ENCODE measurements at regions of chr3 and their contacts with region 1.

Region 1: DNA sequence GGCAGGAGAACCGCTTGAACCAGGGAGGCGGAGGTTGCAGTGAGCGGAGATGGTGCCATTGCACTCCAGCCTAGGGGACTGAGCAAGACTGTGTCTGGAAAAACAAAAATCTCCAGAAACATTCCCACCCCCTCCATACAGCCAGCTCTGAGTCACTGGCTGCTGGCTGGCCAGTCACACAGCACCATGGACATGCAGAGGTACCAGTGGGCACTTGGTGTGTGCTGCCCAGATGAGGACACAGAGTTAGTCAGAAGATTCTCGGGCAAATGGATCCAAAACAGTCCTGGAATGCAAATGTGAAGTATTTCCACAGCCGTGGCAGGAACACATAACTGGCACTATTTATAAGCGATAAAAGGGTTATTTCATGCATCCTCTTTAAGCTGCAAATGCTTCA is 44.6 kb downstream of the BDH1 start:
- DNase-seq: no peak
- ATAC-seq: no peak
- H3K4me3 Mint-ChIP-seq: no peak overlapping the region
- H3K27ac Mint-ChIP-seq: no peak overlapping the region
- H3K4me1 Mint-ChIP-seq: peaks cover 6% of the 10 kb centered on the region
- H3K27me3 Mint-ChIP-seq: no peaks in the 10 kb centered on the region

Region 2: DNA sequence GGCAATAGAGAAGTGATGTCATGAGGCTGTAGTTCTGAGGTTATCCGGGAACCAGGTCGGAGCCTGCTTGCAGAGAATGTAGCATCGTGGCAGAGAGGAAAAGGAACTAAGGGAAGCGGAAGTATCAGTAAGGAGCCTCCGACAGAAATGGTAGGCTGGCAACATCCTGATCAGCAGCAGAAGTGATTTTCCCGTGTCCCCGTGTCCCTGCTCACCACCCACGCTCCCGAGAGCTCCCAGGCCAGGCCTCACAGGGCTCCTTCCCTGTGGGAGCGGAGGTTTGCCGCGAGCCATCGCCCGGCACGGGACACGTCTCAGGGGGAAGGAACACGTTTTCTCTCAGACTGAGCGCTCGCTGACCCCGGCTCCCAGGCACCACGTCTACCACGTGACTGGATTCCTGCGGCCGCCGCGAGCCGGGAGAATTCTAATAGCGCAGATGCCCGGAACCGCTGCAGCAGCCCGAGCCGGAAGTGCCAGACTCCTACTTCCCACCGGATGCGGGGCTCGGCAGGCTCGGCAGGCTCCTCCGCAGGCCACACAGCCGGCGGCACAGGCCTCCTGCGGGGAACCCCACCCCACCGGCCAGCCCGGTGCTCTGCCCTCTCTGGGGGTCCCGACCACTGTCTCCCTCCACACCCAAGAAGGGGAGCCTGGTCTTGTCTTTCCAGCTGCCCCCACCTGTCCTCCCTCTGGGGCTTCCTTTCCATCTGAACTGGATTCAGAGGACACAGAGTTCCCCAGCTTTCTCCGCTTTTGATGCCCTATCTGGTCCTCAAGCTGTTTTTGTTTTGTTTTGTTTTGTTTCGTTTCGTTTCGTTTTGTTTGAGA is 54.7 kb before region 1 on chr3:
- CTCF ChIA-PET with region 1: no interaction called
- POLR2A ChIA-PET with region 1: no interaction called
- intact Hi-C with region 1: loop called in 1 of 2 experiments (anchors 2 kb)
- DNase-seq: peak; percentile 77
- ATAC-seq: peak; percentile 55
- H3K4me3 Mint-ChIP-seq: peak overlapping the region; percentile 76
- H3K27ac Mint-ChIP-seq: peak overlapping the region; percentile 93
- H3K4me1 Mint-ChIP-seq: peaks cover 21% of the 10 kb centered on the region
- H3K27me3 Mint-ChIP-seq: peaks cover 6% of the 10 kb centered on the region